Activated CD4-positive, alpha-beta T cell treated with anti-CD3 and anti-CD28 coated beads, Interleukin-2, amount 10 ng/mL, durations not matched to agents 24 days and 14 days (primary cell): ENCODE measurements at regions of chr18 and their contacts with region 1.

Region 1: GRCh38 chr18:6449213-6449612 is 34.5 kb upstream of the L3MBTL4 start:
- DNase-seq: no peak
- H3K4me3 Mint-ChIP-seq: no peak overlapping the region
- H3K27ac Mint-ChIP-seq: no peak overlapping the region
- H3K4me1 Mint-ChIP-seq: no peaks in the 10 kb centered on the region
- H3K27me3 Mint-ChIP-seq: no peaks in the 10 kb centered on the region

Region 2: DNA sequence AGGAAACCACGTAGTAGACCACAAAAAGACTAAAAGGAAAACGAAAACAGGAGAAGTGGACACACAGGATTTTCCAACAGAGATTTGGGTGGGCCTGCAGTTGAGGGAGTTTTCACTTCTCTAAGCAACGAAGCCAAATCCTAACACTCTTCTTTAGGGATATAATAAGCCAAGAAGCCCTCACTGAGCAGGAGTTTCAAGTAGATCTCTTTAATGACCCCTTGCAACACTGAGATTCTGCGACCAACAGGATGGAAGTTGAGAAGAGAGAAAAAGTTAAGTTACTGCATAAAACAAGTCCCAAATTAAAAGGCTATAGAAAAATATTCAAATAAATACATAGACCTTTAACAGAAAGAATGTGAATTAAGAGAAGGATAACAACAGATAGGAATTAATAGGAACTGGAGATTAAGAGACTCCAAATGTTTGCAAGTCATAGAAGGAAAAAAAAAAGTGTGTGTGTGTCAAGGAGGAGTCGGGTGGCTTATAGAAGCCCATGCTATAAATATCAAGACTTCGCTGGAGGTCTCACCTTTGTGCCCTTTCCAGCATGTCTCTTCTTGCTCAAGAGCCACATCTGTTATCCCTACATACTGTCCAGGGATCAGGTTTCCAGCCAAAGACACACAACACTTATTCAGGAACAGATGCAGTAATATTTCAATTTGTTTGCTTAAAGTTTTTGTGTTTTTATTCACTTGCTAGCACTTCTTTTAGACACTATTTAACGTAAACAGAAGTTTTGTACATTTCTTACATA is 210.9 kb after region 1 on chr18:
- intact Hi-C with region 1: loop called (anchors 5 kb)
- DNase-seq: no peak
- H3K4me3 Mint-ChIP-seq: no peak overlapping the region
- H3K27ac Mint-ChIP-seq: no peak overlapping the region
- H3K4me1 Mint-ChIP-seq: no peaks in the 10 kb centered on the region
- H3K27me3 Mint-ChIP-seq: no peaks in the 10 kb centered on the region